ENCODE measurements at regions of chr3 and their contacts with region 1.

Region 1: DNA sequence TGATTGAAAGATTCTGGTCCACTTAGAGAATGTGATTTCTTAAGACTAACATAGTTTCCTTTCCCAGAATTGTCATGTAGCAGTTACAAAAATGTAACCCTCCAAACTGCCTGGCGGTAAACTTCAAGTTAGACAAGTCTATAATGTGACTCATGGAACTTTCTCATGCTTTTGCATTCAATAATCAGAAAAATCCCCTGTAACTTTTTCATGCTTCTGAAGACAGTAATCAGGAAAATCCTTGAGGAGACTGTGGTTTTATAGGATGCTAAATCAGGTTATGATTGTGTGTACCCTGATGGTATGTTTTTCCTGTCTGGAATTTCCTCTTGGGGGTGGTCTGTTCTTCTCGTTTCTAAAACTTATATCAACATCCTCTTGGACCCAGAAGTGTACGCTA is 74.0 kb upstream of the RARB start:
- DNase-seq: no peak
- ATAC-seq: no peak

Region 2: DNA sequence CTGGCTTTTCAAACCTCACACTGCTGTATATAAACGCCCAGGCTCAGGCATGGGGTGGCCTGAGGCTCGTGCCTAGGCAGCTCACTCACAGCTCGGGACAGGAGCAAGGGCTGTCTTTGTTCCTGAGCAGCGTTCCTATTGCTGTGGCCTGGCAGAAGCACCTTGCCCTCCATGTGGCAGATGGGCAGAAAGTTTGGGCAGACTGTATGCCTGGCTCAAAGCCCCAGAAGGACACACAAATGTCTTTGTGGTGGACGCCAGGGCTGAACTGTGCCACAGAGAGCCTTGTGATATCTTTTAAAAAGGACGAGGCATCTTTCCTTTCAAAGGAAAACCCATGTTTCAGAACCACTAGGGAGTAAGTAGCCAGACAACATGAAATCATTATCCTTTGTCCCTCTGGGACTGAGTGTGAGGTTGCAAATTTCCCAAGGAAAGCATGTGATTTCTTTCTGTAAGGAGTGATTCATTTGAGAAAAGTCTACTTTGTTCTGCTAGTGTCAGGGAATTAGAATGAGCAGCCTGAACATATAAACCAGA is 1577.6 kb before region 1 on chr3:
- intact Hi-C with region 1: loop called (anchors 5 kb)
- DNase-seq: no peak
- ATAC-seq: peak; percentile 91

Region 3: DNA sequence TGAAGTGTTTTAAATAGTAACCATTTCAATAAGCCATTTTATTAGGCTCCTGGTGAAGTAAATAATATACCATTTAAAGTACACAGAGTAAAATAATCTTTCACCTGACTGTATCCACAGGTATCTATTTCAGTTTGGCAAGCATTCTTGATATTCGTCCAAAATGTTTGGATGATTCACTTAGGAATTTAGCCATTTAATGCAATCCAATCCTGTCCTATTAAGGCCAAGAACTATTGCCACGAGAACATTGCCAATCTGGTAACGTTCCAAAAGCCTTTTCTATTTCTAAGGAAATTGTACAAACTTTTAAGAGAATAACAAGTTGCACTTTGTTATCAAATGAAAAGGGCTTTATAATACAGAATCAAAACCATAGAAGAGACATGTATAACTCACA is 649.6 kb before region 1 on chr3:
- intact Hi-C with region 1: no loop called
- DNase-seq: no peak
- ATAC-seq: no peak

Region 4: DNA sequence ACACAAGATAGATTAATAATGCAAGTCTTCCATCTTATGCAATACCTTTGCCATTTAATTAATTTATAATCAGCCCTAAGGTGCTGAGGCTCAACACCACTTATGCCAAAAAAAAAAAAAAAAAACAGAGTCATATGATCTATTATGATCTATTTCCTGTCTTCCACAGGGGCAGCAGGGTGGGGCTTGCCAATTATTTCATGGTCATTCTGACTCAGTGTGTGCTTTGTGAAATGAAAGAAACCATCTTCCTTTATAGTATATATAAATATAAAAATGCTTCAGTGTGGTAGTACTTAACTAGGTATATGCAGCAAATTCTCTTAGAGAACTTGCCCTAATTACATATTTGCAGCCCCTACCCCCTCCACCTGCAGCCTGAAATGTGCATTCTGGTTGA is 66.8 kb after region 1 on chr3:
- intact Hi-C with region 1: no loop called
- DNase-seq: no peak
- ATAC-seq: no peak